ENCODE measurements at regions of chr11 and their contacts with region 1.

Region 1: DNA sequence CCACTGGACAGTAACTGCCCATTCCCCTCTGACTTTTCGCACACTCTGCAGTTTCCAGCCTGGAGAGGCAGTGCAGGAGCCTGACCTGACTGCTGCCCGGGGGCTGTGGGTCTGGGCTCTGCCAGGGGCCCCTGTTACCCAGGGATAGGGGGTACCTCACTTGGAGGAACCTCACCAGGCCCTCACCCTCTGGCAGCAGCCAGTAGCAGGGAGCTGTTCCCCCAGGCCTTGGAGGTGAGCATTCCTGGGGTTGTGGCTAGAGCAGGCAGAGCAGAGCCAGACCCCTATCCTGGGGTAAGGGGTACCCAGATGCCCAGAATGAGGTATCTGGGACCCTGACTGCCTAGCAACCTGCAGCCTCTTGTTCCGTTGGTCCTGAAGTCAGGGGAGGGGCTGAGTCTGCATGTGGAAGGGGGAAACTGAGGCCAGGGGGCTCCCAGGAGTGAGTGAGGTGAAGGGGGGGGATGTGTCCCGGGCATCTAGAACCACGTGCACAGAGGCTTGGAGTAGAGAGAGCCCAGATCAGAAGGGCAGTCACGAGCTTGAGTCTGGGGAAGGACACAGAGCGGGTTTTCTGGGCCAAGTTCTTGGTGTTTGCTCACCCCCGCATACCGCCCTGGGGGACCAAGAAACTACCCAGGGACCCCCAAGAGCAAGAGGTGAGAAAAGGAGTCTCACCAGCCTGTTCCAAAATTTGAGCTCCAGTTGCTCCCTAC is 43.9 kb upstream of the ACCSL start:
- DNase-seq: peak; percentile 60

Region 2: DNA sequence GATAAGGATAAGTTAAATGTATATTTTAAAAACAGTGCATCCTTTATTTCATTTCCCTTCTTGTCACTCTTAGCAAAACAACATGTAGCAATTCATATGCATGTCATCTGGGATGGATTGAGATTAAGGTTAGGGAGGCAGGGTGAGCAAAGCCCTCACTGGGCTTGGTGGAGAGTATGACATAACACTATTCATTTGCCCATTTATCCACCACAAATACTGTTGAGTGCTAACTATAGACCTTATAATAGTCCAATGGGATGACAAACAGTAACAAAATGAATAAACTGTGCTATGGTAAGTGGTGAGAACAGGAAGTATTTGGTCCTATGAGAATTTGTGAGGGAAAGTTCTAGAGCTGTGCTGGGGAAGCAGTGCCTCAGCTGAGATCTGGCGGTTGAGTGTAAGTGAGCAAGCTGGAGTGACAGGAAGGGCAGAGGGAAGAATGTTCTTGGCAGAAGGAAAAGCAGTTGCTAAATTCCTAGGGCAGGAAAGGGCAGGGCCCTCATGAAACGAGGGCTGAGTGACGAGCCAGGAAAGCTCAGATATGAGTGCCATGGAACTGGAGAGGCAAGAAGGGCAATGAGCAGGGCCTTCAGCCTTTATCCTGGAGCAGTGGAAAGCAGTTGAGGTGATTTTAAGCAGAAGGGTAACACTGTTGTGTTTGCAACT is 316.6 kb before region 1 on chr11:
- intact Hi-C with region 1: no loop called
- DNase-seq: peak; percentile 82

Region 3: DNA sequence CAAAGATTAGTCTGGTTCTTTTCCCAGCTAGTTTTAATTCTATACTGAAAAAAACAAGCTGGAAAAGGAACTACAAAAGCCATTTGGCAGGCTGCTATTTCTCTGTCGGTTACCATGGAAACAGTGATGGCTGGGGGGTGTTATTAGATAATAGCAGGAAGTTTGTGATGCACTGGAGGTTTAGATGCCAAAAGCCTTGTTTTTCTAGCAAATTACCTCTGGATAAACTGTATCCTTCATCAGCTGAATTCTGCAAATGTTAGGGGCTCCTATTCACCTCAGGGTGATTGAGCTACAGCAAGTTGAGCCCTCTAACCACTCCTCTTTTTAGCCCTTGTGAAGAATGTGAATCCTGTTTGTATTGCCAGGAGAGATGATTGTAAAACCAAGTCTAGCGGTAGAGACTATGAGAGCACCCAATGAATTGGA is 98.1 kb before region 1 on chr11:
- intact Hi-C with region 1: loop called in 1 of 2 experiments (anchors 5 kb)
- DNase-seq: no peak

Region 4: GRCh38 chr11:44036811-44037657 is 33.1 kb after region 1 on chr11:
- intact Hi-C with region 1: loop called in 1 of 2 experiments (anchors 1 kb)
- DNase-seq: peak; percentile 93

Measured in posterior vena cava (tissue), 2 donors.